Cardiac septum (tissue), 1 donor: ENCODE measurements at regions of chr7 and their contacts with region 1.

Region 1: GRCh38 chr7:100586266-100587025 is at the start of gene FBXO24:
- DNase-seq: peak; percentile 100
- total RNA-seq, gene FBXO24: 0.40 TPM

Region 2: GRCh38 chr7:100602883-100603725 is 16.7 kb after region 1 on chr7:
- intact Hi-C with region 1: loop called (anchors 2 kb)
- DNase-seq: no peak

Region 3: GRCh38 chr7:100611974-100612729 is 25.7 kb after region 1 on chr7 and contains the start of gene MOSPD3:
- intact Hi-C with region 1: loop called (anchors 1 kb)
- DNase-seq: peak; percentile 99
- total RNA-seq, gene MOSPD3: 9.2 TPM

Region 4: DNA sequence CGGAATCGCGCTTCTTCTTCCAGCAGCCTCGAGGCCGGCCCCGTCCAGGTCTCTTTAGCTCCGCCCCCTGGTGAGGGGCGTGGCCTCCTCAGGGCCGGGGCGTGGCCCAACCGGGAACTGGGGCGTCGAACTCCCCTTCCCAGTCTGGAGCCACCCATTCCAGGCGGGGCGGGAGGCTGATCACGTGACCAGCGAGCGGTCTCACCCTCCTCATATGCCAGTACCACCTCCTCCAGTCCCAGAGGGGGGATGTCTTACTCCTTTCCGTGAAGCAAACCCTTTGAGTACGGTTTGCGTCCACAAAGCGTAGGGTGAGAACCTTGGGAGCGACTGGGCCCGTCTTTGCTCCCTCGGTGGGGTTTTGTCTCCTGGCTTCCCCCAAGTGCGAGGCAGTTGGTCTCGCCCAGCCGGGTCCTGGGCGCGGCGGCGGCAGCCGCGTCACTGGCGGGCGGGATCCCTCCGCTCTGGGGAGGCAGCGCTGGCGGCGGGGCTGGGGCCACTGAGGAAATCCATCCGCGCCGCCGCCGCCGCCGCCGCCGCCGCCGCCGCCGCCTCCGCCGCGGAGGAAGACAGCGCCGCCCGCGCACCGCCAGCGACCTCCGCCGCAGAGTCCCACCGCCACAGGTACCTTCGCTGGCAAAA is 87.0 kb after region 1 on chr7 and contains the start of gene GNB2:
- intact Hi-C with region 1: loop called (anchors 5 kb)
- DNase-seq: peak; percentile 100
- total RNA-seq, gene GNB2: 123 TPM